Calu3 (cell line): ENCODE measurements at regions of chr2 and their contacts with region 1.

Region 1: DNA sequence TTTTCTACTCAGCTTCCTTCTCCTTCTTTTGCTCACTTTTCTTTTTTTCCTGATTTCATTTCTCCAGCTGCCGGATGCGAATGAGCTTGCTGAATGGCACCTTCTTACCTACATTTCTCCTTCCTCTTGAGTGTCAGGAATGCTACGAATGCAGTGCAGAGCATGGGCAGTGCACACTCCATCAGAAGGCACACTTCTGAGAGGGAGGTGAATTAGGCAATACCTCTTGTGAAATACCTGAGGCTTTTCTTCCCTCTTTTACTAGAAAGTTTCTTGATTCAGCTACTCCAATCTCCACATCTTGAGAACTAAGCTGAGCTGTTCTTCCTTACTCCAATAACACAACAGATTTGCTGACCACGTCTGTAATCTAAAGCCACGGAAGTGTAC is 51.1 kb downstream of the PLEKHM3 start:
- DNase-seq: peak; percentile 4
- H3K4me3 Mint-ChIP-seq: no peak overlapping the region
- H3K27ac Mint-ChIP-seq: no peak overlapping the region
- H3K4me1 Mint-ChIP-seq: peaks cover 30% of the 10 kb centered on the region
- H3K27me3 Mint-ChIP-seq: no peaks in the 10 kb centered on the region
- CTCF ChIP-seq: no peak

Region 2: DNA sequence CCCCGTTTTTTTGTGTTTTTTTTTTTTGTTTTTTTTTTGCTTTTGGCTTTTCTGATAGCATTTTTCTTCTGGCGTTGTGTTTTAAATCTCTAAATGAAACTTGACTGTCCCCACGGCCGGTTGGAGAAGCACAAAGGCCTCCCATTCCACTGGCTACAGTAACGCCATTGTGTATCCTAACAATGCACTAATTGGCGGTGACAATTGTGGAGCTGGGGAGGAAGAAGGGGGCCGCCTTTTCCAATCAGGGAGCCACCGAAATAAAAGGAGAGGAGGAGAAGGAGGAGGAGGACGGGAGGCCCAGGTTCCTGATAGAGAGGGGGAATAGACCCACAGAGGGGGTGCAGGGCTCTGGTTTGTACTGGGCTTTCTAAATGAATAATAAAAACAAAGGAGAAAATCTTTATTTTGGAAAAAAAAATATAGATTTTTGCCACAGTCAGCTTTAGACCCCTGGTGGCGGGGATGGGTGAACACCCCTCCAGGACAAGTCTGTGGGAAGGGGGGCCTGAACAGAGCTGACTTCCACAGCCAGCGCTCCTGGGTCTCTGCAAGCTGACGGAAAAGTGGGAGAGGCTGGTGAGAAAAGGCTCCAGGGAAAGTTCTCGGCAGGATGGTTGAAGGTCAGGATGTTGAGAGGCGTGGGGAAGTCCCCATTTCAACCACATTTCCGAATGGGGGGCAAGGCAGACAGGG is 160.8 kb before region 1 on chr2:
- CTCF ChIA-PET with region 1: no interaction called
- intact Hi-C with region 1: loop called (anchors 5 kb)
- DNase-seq: no peak
- H3K4me3 Mint-ChIP-seq: no peak overlapping the region
- H3K27ac Mint-ChIP-seq: no peak overlapping the region
- H3K4me1 Mint-ChIP-seq: peaks cover 48% of the 10 kb centered on the region
- H3K27me3 Mint-ChIP-seq: no peaks in the 10 kb centered on the region
- CTCF ChIP-seq: no peak

Region 3: DNA sequence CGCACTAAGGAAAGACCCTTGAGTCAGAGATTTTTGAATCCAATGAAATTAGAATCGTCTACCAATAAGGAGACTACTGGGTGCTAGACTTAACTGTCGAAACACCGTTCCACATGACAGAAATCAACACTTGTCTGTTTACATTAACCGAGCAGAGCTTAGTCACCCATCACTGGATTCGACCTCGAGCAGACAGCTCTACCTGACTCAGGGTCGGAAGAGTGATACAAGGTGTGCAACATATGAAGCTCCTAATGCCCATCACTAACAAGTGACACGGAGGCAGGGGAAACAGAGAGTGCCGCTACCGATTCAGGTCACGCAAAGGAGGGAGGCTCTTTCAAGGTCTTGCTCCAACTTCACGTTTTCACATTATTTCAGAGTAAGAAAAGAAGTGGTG is 150.3 kb before region 1 on chr2:
- CTCF ChIA-PET with region 1: no interaction called
- intact Hi-C with region 1: no loop called
- DNase-seq: no peak
- H3K4me3 Mint-ChIP-seq: no peak overlapping the region
- H3K27ac Mint-ChIP-seq: no peak overlapping the region
- H3K4me1 Mint-ChIP-seq: peaks cover 42% of the 10 kb centered on the region
- H3K27me3 Mint-ChIP-seq: no peaks in the 10 kb centered on the region
- CTCF ChIP-seq: no peak

Region 4: GRCh38 chr2:208033758-208034502 is 59.7 kb after region 1 on chr2:
- CTCF ChIA-PET with region 1: interaction called, 6 read pairs
- intact Hi-C with region 1: loop called (anchors 1 kb)
- DNase-seq: peak; percentile 78
- H3K4me3 Mint-ChIP-seq: no peak overlapping the region
- H3K27ac Mint-ChIP-seq: peak overlapping the region; percentile 55
- H3K4me1 Mint-ChIP-seq: peaks cover 14% of the 10 kb centered on the region
- H3K27me3 Mint-ChIP-seq: no peaks in the 10 kb centered on the region
- CTCF ChIP-seq: peak; percentile 43